Right ventricle myocardium inferior (tissue), 1 donor: ENCODE measurements at regions of chr10 and their contacts with region 1.

Region 1: DNA sequence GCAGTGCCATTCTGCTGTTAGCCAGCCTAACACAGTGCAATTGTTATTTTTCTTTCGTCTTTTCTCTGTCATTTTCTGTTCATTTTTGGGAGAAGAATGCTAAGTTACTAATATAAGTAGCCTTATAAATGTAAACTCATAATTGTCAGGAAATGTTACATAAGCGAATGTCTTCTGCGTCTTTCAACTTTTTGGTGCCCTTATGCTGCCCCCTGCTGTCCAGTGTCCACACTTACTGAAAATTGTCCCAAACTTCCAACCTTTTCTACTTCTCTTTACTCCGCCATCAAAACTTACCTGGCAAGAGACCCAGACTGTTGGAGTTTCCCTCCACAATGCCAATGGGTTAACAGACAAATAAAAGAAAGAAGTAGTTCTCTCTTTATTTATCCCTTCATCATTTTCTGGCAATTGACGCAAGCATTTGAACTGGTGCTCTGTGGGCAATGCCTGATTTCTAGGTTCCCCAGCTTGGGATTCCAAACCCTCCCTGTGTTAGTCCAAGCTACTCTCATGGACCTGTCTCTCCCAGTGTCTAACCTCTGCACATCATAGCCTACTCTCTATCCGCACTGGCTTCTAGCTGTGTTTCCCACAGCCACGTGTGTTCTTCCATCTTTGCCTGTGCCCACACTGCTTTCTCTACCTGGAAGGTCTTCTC is 21.0 kb upstream of the EPC1 start:
- DNase-seq: no peak
- ATAC-seq: peak; percentile 38

Region 2: GRCh38 chr10:32190890-32191491 is 176.9 kb before region 1 on chr10:
- intact Hi-C with region 1: loop called (anchors 5 kb)
- DNase-seq: no peak
- ATAC-seq: no peak

Region 3: GRCh38 chr10:32346134-32346550 is 21.8 kb before region 1 on chr10:
- intact Hi-C with region 1: loop called (anchors 2 kb)
- DNase-seq: peak; percentile 98
- ATAC-seq: peak; percentile 98

Region 4: GRCh38 chr10:32386623-32387260 is 18.8 kb after region 1 on chr10:
- intact Hi-C with region 1: no loop called
- DNase-seq: no peak
- ATAC-seq: no peak